ENCODE measurements at regions of chr3 and their contacts with region 1.

Region 1: DNA sequence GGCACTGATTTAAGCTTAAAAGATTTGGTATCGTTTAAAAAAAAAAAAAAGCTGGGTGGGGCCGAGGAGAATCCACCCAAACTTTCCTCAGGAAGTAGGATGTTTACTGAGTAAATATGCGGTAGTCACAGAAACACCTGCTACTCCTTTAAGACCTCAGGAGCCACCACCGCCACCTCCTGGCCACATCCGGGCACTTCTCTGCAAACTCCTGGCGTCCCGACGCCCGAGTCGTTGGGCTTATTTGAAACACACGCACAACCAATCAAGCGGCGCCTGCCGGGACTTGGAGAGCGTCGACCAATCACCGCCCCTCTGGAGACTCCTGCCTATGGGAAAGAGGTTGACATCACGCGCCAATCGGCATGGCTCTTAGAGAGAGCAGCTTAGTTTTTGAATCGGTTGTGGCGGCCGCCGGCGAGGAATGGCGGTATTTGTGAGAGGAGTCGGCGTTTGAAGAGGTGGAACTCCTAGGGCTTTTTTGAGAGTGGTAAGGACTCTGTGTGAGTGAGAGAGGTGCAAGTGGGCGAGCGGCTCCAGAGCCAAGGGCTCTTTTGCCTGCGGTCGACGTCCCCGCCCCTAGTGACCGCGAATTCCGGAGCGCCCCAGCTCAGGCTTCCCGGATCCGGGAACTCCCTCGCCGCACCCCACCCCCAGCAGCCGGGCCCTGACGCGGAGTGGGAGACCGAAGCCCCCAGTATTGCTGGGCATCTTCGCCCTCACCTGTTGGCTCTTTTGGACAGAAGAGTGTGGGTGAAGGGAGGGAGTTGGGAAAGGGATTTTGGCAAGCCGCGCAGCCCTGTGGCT is at the start of gene ECT2:
- DNase-seq: peak; percentile 99
- H3K4me3 Mint-ChIP-seq: peak within 1 kb of the TSS; percentile 88
- H3K27ac Mint-ChIP-seq: peak within 1 kb of the TSS; percentile 96
- H3K4me1 Mint-ChIP-seq: peaks cover 32% of the 10 kb centered on the region
- H3K27me3 Mint-ChIP-seq: peaks cover 6% of the 10 kb centered on the region
- total RNA-seq, gene ECT2: 36.2 and 40.4 TPM in 2 replicates

Region 2: GRCh38 chr3:170869645-170870593 is 1880.7 kb before region 1 on chr3 and contains the start of gene RPL22L1:
- intact Hi-C with region 1: loop called (anchors 1 kb)
- DNase-seq: peak; percentile 98
- H3K4me3 Mint-ChIP-seq: peak within 1 kb of the TSS; percentile 92
- H3K27ac Mint-ChIP-seq: peak within 1 kb of the TSS; percentile 96
- H3K4me1 Mint-ChIP-seq: peaks cover 18% of the 10 kb centered on the region
- H3K27me3 Mint-ChIP-seq: no peaks in the 10 kb centered on the region
- total RNA-seq, gene RPL22L1: 157 TPM in 2 replicates

Region 3: DNA sequence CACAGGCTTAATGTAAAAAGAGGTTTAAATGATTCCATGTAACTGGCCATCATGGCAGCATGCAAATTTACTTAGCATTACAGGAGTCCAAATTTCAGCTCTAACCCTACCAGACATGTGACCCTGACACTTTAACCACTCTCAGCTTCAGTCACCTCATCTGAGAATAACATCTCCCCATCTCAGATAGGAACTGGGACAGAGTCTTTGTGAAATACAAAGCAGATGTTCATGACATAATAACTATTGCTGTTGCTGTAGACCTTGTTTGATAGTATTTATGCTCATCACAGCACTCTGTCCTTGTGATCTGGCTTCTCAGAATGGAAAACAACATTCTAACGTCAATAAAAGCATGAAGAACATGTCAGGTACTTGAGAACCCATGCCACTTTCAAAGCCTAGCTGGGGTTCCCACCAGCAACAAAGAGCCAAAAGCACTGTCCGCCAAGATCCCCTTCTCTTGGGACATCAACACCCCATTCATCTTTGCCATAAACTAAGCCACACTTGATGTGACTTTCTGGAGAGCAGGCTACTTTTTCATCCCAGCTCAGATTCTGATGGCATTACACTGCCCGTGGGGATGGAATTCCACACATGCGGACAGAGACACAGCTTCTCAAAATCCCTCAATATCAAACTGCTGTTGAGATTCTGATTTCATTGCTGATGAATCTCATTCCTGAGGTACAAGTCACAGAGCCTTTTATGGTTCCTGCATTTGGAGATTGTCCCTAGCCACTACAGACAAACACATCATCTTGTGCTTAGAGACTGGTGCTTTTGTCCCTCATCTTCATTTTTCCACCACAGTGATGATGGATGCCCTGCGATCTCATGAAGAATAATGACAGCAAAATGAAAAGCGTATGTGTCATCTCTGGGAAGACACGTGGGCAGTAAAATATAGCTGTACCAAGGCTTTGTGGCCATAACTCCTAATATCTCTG is 1493.0 kb before region 1 on chr3:
- intact Hi-C with region 1: loop called (anchors 5 kb)
- DNase-seq: peak; percentile 69
- H3K4me3 Mint-ChIP-seq: peak overlapping the region; percentile 49
- H3K27ac Mint-ChIP-seq: peak overlapping the region; percentile 93
- H3K4me1 Mint-ChIP-seq: peaks cover 81% of the 10 kb centered on the region
- H3K27me3 Mint-ChIP-seq: no peaks in the 10 kb centered on the region

Region 4: GRCh38 chr3:172673210-172673679 is 77.3 kb before region 1 on chr3:
- intact Hi-C with region 1: loop called (anchors 1 kb)
- DNase-seq: peak; percentile 92
- H3K4me3 Mint-ChIP-seq: no peak overlapping the region
- H3K27ac Mint-ChIP-seq: no peak overlapping the region
- H3K4me1 Mint-ChIP-seq: peaks cover 10% of the 10 kb centered on the region
- H3K27me3 Mint-ChIP-seq: no peaks in the 10 kb centered on the region

Region 5: DNA sequence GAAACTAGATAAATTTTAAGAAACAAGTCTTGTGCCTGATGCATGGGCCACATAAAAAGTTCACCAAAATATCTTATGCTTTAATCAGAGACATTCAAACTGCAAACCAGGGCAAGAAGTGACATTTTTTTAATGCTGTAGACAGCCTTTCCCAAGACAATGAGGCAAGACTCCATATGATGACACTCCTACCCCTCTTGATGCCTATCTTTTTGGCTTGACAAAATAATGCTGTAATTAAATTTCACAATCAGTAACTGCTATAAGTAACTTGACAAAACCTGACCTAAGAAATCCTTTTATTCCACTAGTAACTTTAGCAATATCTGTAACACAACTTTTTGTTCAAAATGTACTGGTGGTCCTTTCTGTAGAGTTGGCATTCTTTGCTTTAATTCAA is 48.7 kb after region 1 on chr3:
- intact Hi-C with region 1: loop called (anchors 5 kb)
- DNase-seq: no peak
- H3K4me3 Mint-ChIP-seq: no peak overlapping the region
- H3K27ac Mint-ChIP-seq: no peak overlapping the region
- H3K4me1 Mint-ChIP-seq: peaks cover 8% of the 10 kb centered on the region
- H3K27me3 Mint-ChIP-seq: no peaks in the 10 kb centered on the region